Motor neuron (in vitro differentiated cells): ENCODE measurements at regions of chr6 and their contacts with region 1.

Region 1: GRCh38 chr6:147202516-147203312 is 1.5 kb upstream of the STXBP5 start:
- ATAC-seq: peak; percentile 65 to 79 (median 76)
- H3K4me3 ChIP-seq: peak overlapping the region; percentile 56 to 89 (median 77)
- H3K27ac ChIP-seq: peak overlapping the region; percentile 90 to 92
- H3K4me1 ChIP-seq: peaks cover 4 to 15% of the 10 kb centered on the region in 2 donors

Region 2: GRCh38 chr6:146857180-146857979 is 345.3 kb before region 1 on chr6:
- in situ Hi-C with region 1: loop called in 1 of 9 experiments (anchors 25 kb)
- ATAC-seq: peak; percentile 58 to 99 (median 97)
- H3K4me3 ChIP-seq: peak overlapping the region; percentile 10 to 29 (median 17)
- H3K27ac ChIP-seq: peak overlapping the region in 1 of 2 donors; percentile 19
- H3K4me1 ChIP-seq: peaks cover 6 to 9% of the 10 kb centered on the region in 2 donors

Region 3: GRCh38 chr6:146913842-146914488 is 288.7 kb before region 1 on chr6:
- in situ Hi-C with region 1: loop called in 1 of 9 experiments (anchors 25 kb)
- ATAC-seq: peak; percentile 80 to 96 (median 95)
- H3K4me3 ChIP-seq: peak overlapping the region in 1 of 5 donors; percentile 2
- H3K27ac ChIP-seq: peak overlapping the region; percentile 41 to 64
- H3K4me1 ChIP-seq: peaks cover 13 to 27% of the 10 kb centered on the region in 2 donors

Region 4: GRCh38 chr6:146957181-146958093 is 245.3 kb before region 1 on chr6:
- in situ Hi-C with region 1: no loop called
- ATAC-seq: peak; percentile 67 to 93 (median 84)
- H3K4me3 ChIP-seq: no peak overlapping the region
- H3K27ac ChIP-seq: no peak overlapping the region
- H3K4me1 ChIP-seq: peaks cover 9% of the 10 kb centered on the region in 2 donors

Region 5: GRCh38 chr6:147361311-147361981 is 158.7 kb after region 1 on chr6:
- in situ Hi-C with region 1: no loop called
- ATAC-seq: no peak
- H3K4me3 ChIP-seq: no peak overlapping the region
- H3K27ac ChIP-seq: no peak overlapping the region
- H3K4me1 ChIP-seq: no peaks in the 10 kb centered on the region